Sigmoid colon (tissue), 7 donors: ENCODE measurements at regions of chr20 and their contacts with region 1.

Region 1: DNA sequence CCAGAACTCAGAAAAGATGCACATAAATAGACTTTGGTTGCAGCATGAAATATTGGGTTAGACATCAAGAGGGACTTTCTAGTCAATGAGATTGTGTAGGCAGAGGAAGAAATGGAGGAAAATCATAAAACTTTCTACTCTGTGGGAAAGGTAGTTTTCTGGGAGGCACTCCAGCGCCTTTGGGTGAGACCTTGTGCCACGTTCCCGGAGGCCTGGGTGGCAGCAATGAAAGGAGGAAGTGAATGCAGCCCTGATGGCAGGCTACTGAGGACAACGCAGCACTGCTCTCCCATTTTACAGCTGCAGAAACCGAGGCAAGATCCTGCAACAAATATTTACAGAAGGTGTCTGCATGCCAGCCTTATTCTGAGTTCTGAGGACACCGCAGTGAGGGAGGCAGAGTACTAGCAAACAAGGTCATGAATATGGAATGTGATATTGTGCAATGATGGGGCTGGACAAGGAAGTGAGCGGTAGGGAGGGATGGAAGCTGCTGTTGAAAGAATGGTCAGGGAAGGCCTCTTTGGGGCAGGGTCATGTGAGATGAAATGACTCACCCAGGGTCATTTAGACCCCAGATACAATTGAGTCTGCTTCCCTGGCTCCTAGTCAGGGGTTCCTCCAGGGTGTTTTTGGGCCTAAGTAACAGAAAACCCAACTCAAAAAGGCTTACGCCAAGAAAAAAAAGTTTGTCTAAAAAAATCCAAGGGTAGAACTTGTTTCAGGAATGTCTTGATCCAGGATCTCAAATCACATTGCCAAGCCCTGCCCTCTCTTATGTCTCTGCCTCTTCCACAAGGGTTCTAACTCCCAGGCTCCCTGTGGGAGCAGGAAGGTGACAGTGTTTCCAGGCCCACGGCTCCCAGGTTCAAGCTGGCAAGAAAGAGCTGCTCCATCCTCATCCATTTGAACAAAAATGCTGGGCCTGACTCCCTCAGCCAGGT is 159.2 kb downstream of the TFAP2C start:
- DNase-seq: peak; percentile 81
- H3K4me3 ChIP-seq: no peak overlapping the region
- H3K27ac ChIP-seq: peak overlapping the region; percentile 70 to 92 (median 86)
- H3K4me1 ChIP-seq: peaks cover 0 to 39% (median 26%) of the 10 kb centered on the region in 4 donors
- H3K27me3 ChIP-seq: no peaks in the 10 kb centered on the region
- CTCF ChIP-seq: no peak
- EP300 ChIP-seq: peak in 2 of 4 donors; percentile 63 to 83
- POLR2A ChIP-seq: no peak

Region 2: GRCh38 chr20:56257604-56258003 is 530.7 kb before region 1 on chr20:
- intact Hi-C with region 1: no loop called
- DNase-seq: no peak
- H3K4me3 ChIP-seq: no peak overlapping the region
- H3K27ac ChIP-seq: no peak overlapping the region
- H3K4me1 ChIP-seq: no peaks in the 10 kb centered on the region
- H3K27me3 ChIP-seq: peaks cover 0 to 9% (median 0%) of the 10 kb centered on the region in 3 donors
- CTCF ChIP-seq: no peak
- EP300 ChIP-seq: no peak
- POLR2A ChIP-seq: no peak

Region 3: GRCh38 chr20:56826705-56827631 is 38.7 kb after region 1 on chr20:
- intact Hi-C with region 1: loop called (anchors 1 kb)
- DNase-seq: peak; percentile 83
- H3K4me3 ChIP-seq: peak overlapping the region in 2 of 4 donors; percentile 24 to 29
- H3K27ac ChIP-seq: peak overlapping the region; percentile 46 to 91 (median 85)
- H3K4me1 ChIP-seq: peaks cover 0 to 41% (median 26%) of the 10 kb centered on the region in 4 donors
- H3K27me3 ChIP-seq: no peaks in the 10 kb centered on the region
- CTCF ChIP-seq: no peak
- EP300 ChIP-seq: peak; percentile 16 to 67 (median 22)
- POLR2A ChIP-seq: no peak

Region 4: DNA sequence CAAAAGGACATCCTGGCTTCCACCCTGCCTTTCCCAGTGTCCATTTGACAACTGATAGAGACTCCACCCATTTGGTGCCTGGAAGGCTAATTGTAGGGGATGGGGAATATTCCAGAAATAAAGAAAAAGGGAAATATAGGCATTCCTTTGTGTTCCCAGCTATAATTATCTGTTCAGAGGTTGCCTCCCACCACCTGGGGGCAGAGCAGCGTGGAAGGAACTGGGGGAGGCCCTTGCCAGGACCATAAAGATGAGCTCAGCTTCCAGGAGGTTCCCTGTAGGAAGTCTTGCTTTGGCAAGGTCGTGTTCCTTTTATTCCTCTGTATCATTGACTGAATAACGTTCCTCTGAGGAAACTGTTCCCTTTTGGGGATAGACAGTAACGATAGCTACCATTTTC is 55.5 kb after region 1 on chr20:
- intact Hi-C with region 1: loop called (anchors 5 kb)
- DNase-seq: no peak
- H3K4me3 ChIP-seq: no peak overlapping the region
- H3K27ac ChIP-seq: peak overlapping the region in 2 of 4 donors; percentile 70 to 72
- H3K4me1 ChIP-seq: peaks cover 0 to 71% (median 52%) of the 10 kb centered on the region in 4 donors
- H3K27me3 ChIP-seq: no peaks in the 10 kb centered on the region
- CTCF ChIP-seq: no peak
- EP300 ChIP-seq: no peak
- POLR2A ChIP-seq: no peak

Region 5: DNA sequence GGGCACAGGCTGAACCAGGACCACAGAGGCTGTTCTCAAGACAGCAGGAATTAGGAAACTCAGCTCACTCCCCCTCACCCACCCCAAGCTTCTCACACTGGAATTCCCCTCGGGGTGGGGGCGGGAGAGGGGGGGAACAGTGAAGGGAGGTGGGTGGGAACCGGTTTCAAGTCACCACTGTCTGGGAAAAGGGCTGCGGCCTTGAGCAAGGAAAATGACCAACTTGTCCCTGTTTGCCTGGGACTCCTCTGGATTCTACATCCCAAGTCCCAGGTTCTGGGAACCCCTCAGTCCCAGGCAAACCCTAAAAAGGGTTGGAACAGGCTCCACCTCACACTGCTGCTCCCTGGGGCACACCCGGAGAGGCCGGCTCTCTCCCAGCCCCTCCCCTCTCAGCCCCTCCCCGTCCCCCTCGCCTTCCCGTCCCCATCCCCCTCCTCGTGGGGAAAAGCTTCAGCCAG is 71.5 kb after region 1 on chr20:
- intact Hi-C with region 1: loop called (anchors 5 kb)
- DNase-seq: no peak
- H3K4me3 ChIP-seq: no peak overlapping the region
- H3K27ac ChIP-seq: peak overlapping the region; percentile 54 to 72 (median 63)
- H3K4me1 ChIP-seq: peaks cover 0 to 44% (median 30%) of the 10 kb centered on the region in 4 donors
- H3K27me3 ChIP-seq: no peaks in the 10 kb centered on the region
- CTCF ChIP-seq: no peak
- EP300 ChIP-seq: no peak
- POLR2A ChIP-seq: no peak

Region 6: DNA sequence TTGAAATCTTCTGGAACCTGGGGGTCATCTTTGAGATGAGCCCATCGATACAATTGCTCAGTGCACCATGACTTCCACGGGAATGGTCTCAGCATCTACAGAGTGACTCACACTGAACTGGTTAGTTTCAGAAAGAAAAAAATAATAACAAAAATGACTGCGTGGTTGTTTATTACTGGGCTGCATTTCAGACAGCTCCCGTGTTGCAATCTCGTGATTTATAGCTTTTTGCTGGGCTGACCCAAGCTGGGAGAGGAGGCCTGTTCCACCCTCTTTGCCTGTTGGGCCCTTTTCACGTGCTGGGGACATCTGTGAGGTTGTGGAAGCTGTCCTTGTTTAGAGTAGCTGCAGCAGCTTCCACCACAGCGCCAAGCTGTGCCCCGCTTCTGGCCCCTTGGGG is 252.6 kb after region 1 on chr20:
- intact Hi-C with region 1: loop called (anchors 5 kb)
- DNase-seq: peak; percentile 84
- H3K4me3 ChIP-seq: no peak overlapping the region
- H3K27ac ChIP-seq: peak overlapping the region in 3 of 4 donors; percentile 44 to 67 (median 57)
- H3K4me1 ChIP-seq: peaks cover 0 to 59% (median 26%) of the 10 kb centered on the region in 4 donors
- H3K27me3 ChIP-seq: no peaks in the 10 kb centered on the region
- CTCF ChIP-seq: no peak
- EP300 ChIP-seq: peak; percentile 34 to 88 (median 60)
- POLR2A ChIP-seq: no peak